PC-9 (cell line): ENCODE measurements at regions of chr11 and their contacts with region 1.

Region 1: GRCh38 chr11:5151713-5152153 is 2.8 kb downstream of the OR52A1 start:
- DNase-seq: no peak
- H3K4me3 ChIP-seq: no peak overlapping the region
- H3K27ac ChIP-seq: no peak overlapping the region
- H3K4me1 ChIP-seq: no peaks in the 10 kb centered on the region
- H3K27me3 ChIP-seq: no peaks in the 10 kb centered on the region
- CTCF ChIP-seq: no peak

Region 2: GRCh38 chr11:5107285-5107684 is 44.4 kb before region 1 on chr11:
- CTCF ChIA-PET with region 1: no interaction called
- POLR2A ChIA-PET with region 1: no interaction called
- intact Hi-C with region 1: no loop called
- DNase-seq: no peak
- H3K4me3 ChIP-seq: no peak overlapping the region
- H3K27ac ChIP-seq: no peak overlapping the region
- H3K4me1 ChIP-seq: no peaks in the 10 kb centered on the region
- H3K27me3 ChIP-seq: no peaks in the 10 kb centered on the region
- CTCF ChIP-seq: no peak

Region 3: DNA sequence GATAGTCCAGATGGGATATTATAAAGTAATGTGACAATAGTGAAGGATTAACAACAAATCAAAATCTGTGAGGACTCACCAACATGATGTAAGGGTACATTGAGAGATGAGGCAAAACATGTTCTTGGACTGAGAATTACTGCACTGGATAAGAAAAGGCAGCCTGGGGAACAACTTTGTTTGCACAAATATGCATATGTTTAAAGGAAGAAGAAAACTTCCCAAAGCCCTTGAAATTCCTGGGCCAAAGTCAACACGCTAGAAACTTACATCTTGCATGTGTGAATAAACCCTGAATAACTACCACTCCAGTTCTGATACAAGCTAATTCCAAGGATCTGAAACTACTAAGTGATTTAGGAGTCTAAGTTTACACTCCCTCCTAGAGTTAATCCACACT is 14.7 kb before region 1 on chr11:
- CTCF ChIA-PET with region 1: no interaction called
- POLR2A ChIA-PET with region 1: no interaction called
- intact Hi-C with region 1: loop called (anchors 1 kb)
- DNase-seq: no peak
- H3K4me3 ChIP-seq: no peak overlapping the region
- H3K27ac ChIP-seq: no peak overlapping the region
- H3K4me1 ChIP-seq: no peaks in the 10 kb centered on the region
- H3K27me3 ChIP-seq: no peaks in the 10 kb centered on the region
- CTCF ChIP-seq: no peak

Region 4: DNA sequence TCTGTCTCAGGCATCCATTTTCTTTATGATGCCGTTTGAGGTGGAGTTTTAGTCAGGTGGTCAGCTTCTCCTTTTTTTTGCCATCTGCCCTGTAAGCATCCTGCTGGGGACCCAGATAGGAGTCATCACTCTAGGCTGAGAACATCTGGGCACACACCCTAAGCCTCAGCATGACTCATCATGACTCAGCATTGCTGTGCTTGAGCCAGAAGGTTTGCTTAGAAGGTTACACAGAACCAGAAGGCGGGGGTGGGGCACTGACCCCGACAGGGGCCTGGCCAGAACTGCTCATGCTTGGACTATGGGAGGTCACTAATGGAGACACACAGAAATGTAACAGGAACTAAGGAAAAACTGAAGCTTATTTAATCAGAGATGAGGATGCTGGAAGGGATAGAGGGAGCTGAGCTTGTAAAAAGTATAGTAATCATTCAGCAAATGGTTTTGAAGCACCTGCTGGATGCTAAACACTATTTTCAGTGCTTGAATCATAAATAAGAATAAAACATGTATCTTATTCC is 128.9 kb after region 1 on chr11:
- CTCF ChIA-PET with region 1: no interaction called
- POLR2A ChIA-PET with region 1: no interaction called
- intact Hi-C with region 1: no loop called
- DNase-seq: peak; percentile 71 to 72
- H3K4me3 ChIP-seq: no peak overlapping the region
- H3K27ac ChIP-seq: peak overlapping the region; percentile 56
- H3K4me1 ChIP-seq: peaks cover 7% of the 10 kb centered on the region
- H3K27me3 ChIP-seq: no peaks in the 10 kb centered on the region
- CTCF ChIP-seq: no peak

Region 5: DNA sequence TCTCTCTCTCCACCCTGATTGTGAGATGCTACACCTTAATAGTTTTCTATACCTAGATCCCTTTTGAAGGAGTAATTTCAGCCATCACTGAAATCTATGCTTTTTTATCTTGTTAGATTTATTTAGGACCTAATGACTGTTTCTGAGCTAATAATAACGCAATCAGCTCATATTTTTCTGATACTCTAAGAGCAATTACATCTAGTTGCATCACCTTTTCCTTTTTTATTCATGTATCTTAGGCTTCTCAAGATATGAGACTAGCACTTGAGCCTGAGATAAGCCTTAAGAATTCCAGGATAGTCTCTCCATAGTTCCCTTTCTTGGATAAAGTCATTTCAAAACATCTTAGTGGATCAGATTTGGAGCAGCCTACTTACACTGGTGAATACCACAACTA is 1193.6 kb after region 1 on chr11:
- CTCF ChIA-PET with region 1: no interaction called
- POLR2A ChIA-PET with region 1: interaction called, 43 read pairs
- intact Hi-C with region 1: no loop called
- DNase-seq: no peak
- H3K4me3 ChIP-seq: no peak overlapping the region
- H3K27ac ChIP-seq: no peak overlapping the region
- H3K4me1 ChIP-seq: no peaks in the 10 kb centered on the region
- H3K27me3 ChIP-seq: no peaks in the 10 kb centered on the region
- CTCF ChIP-seq: no peak